MCF 10A (cell line): ENCODE measurements at regions of chr12 and their contacts with region 1.

Region 1: DNA sequence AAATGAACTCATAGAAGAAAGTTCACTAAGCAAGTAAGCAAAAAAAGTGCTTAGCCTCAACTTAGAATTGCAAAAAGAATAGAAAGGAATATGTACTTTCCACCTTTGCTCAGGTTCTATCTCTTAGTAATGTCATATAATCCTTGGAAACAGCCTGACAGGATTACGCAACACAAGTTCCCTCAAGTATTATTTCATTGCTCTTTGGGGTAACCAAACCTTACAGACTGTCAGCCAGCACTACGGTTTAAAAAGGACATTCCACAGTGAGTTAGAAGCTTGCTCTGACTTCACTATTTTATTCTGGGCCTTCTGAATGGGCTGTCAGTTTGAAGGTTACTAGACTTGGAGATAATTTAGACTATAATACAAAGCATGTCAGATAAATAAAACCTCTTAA is 264.0 kb downstream of the ATXN7L3B start:
- DNase-seq: peak; percentile 54
- H3K4me3 Mint-ChIP-seq: no peak overlapping the region
- H3K27ac Mint-ChIP-seq: no peak overlapping the region
- H3K4me1 Mint-ChIP-seq: no peaks in the 10 kb centered on the region
- H3K27me3 Mint-ChIP-seq: no peaks in the 10 kb centered on the region
- CTCF ChIP-seq: no peak

Region 2: DNA sequence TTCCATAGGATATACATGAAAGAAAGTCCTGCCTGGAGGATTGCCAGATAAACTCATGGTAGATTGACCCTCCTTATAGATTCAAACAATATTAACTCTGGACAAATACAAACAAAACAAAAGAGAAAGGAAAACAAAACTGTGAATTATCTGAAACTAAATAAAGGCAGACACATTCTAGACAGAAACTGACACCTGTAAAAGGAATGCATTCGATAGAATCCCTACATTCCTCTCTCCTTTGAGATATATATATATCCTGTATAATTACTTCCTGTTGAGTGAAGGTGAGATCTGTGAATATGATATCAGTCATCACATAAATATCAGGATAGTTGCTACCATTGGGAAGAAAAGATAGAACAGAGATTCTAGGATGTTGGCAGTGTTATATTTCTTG is 1212.4 kb before region 1 on chr12:
- CTCF ChIA-PET with region 1: no interaction called
- POLR2A ChIA-PET with region 1: no interaction called
- intact Hi-C with region 1: no loop called
- DNase-seq: no peak
- H3K4me3 Mint-ChIP-seq: no peak overlapping the region
- H3K27ac Mint-ChIP-seq: no peak overlapping the region
- H3K4me1 Mint-ChIP-seq: no peaks in the 10 kb centered on the region
- H3K27me3 Mint-ChIP-seq: no peaks in the 10 kb centered on the region
- CTCF ChIP-seq: no peak

Region 3: DNA sequence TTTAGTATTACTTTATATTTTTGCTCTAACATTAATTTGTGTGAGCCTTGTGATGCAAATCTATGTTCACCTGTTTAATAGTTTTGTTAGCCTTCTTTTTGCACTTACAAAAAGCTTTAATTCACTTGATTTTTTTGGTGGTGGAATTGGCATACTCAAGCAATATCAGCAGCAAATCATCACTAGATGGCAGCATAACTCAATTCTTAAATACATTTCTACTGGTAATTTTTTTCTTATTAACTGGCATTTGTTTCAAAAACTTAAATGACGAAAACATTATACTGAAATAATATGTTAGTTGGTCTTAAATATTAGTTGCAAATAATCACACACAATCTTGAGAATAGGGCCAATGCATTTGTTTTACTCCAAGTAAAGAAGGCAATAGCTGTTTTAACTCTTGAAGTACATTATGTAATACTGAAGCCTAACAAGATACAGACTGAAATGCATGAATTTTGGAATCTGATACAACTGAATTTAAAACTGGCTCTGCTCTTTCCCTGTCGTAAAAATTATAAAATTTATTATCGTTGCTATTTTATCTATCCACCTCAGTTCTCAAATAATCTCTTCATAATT is 112.5 kb before region 1 on chr12:
- CTCF ChIA-PET with region 1: interaction called, 6 read pairs
- POLR2A ChIA-PET with region 1: no interaction called
- intact Hi-C with region 1: loop called (anchors 1 kb)
- DNase-seq: peak; percentile 59
- H3K4me3 Mint-ChIP-seq: no peak overlapping the region
- H3K27ac Mint-ChIP-seq: no peak overlapping the region
- H3K4me1 Mint-ChIP-seq: no peaks in the 10 kb centered on the region
- H3K27me3 Mint-ChIP-seq: no peaks in the 10 kb centered on the region
- CTCF ChIP-seq: peak; percentile 59

Region 4: DNA sequence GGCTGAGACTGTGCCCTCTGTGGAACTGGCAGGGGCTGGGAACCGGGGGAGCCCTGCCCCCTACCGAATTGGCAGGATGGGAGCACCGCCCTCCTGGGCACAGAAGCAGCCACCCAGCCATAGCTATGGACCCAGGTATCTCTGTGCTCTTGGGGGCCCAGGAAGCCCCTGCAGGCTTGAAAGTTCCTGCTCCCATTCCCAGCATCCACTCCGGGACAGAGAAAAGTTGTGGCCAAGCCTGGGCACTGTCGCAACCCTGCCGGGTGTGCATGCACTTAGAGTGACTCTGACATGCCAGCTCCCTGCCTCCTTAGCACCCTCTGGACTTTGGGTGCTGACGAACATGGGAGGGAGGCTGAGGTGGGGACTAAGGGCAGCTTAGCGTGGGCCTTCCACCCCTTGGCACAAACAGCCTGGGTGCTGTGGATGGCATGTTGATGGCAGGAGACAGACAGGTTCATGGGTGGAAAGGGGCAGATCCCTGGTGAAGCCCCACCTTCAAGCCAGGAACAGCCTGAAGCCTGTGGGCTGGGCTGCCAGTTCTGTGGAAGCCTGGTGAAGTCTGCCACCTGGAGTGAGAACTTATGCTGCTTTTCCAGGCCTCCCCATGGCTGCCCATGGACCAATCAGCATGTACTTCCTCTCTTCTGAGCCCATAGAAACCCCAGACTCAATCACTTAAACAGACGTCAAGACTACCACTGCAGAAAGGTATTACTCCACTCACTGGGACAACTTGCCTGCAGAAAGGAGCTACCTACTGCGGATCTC is 15.0 kb after region 1 on chr12:
- CTCF ChIA-PET with region 1: no interaction called
- POLR2A ChIA-PET with region 1: no interaction called
- intact Hi-C with region 1: no loop called
- DNase-seq: no peak
- H3K4me3 Mint-ChIP-seq: no peak overlapping the region
- H3K27ac Mint-ChIP-seq: no peak overlapping the region
- H3K4me1 Mint-ChIP-seq: no peaks in the 10 kb centered on the region
- H3K27me3 Mint-ChIP-seq: no peaks in the 10 kb centered on the region
- CTCF ChIP-seq: no peak

Region 5: GRCh38 chr12:75341832-75342231 is 540.2 kb after region 1 on chr12:
- CTCF ChIA-PET with region 1: no interaction called
- POLR2A ChIA-PET with region 1: no interaction called
- intact Hi-C with region 1: no loop called
- DNase-seq: peak; percentile 44
- H3K4me3 Mint-ChIP-seq: no peak overlapping the region
- H3K27ac Mint-ChIP-seq: no peak overlapping the region
- H3K4me1 Mint-ChIP-seq: no peaks in the 10 kb centered on the region
- H3K27me3 Mint-ChIP-seq: no peaks in the 10 kb centered on the region
- CTCF ChIP-seq: no peak